ENCODE measurements at regions of chr3 and their contacts with region 1.

Region 1: DNA sequence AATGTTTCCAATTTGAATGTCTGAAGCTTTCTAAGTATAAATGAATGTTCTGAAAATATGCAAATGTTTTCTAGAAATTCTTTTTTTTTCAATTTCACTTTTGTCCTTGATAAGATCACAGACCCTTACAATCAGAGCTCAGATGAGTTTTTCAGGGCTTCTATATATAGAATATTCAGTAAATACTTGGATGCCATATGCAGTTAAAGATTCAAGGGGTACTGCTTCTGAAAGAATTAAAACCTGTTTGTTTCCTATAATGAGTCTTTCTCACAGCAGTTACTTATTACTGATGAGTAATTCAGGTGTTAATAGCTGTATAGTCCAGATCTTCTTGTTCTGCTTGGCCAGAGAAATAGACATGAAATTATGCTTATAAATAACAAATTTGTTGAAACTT is 812.6 kb downstream of the ZPLD1 start:
- DNase-seq: no peak

Region 2: DNA sequence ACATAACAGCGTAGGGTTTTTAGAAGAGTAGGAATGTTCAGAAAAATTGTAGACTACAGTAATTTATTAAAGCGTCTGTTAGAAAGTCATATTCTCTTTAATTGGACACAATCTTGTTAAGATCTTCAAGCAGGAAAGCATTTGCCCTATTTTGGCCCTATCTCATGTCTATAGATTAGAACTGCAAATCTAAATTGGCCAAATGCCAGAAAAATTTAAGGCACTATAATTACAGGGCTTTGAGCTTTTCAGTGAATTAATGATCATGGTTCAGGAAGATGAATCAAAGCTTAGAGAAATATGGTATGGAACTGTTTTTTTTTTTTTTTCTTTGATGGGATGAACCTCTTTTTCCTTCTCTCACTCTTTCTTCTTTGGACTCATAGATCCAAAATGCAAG is 47.1 kb before region 1 on chr3:
- in situ Hi-C with region 1: loop called (anchors 5 kb)
- DNase-seq: no peak

Region 3: DNA sequence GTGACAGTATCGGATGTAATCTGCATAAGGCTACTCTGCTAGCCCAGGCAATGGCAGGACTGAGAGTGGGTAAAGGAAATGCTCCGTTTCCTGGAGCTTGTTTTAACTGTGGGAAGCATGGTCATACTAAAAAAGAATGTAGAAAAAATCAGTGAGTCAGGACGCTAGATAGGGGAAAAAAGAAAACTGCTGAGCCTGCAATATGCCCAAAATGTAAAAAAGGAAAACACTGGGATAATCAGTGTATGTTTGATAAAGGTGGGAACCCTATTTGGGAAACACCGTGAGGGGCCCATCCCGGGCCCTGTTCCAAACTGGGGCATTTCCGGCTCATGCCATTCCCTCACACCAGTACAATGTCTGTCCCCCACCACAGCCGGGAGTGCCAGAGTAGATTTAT is 36.9 kb before region 1 on chr3:
- in situ Hi-C with region 1: no loop called
- DNase-seq: no peak

Region 4: GRCh38 chr3:103672346-103672745 is 424.9 kb after region 1 on chr3:
- in situ Hi-C with region 1: no loop called
- DNase-seq: no peak